ENCODE measurements at regions of chr19 and their contacts with region 1.

Region 1: GRCh38 chr19:48872182-48872883 is at the start of gene PPP1R15A:
- DNase-seq: peak; percentile 88
- H3K4me3 ChIP-seq: peak within 1 kb of the TSS; percentile 100
- CTCF ChIP-seq: no peak

Region 2: GRCh38 chr19:48835734-48836088 is 36.6 kb before region 1 on chr19:
- CTCF ChIA-PET with region 1: interaction called, 6 read pairs
- POLR2A ChIA-PET with region 1: interaction called, 12 read pairs
- DNase-seq: no peak
- H3K4me3 ChIP-seq: peak overlapping the region; percentile 64
- CTCF ChIP-seq: peak; percentile 92

Region 3: DNA sequence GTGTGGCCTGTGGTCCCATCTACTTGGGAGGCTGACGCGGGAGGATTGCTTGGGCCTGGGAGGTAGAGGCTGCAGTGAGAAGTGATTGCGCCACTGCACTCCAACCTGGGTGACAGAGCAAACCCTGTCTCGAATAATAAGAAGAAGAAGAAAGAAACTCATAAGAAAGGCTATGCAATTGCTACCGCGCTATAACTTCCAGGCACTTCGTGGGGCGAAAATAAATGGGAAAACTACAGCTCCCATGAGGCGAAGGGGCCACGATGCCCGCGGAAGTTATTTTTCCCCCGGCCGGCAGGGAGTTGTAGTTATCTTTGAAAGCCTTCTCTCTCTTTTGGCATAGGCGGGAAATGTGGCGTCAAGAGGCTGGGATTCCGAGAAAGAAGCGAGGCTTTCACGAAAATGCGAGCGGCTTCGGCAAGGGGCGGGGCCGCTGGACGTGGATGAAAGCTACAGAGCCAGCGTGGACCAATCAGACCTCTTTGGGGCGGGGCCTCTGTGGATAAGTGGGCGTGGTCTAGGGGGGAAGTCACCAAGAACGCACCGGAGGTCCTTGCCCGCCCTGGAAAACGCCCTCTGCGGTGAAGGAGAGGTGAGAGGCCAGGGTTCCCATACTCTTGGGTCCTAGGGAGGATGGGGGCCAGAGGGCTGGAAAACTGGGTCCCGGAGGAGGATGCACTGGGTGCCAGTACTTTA is 27.6 kb after region 1 on chr19 and contains the start of gene NUCB1:
- CTCF ChIA-PET with region 1: no interaction called
- POLR2A ChIA-PET with region 1: interaction called, 14 read pairs
- DNase-seq: peak; percentile 83
- H3K4me3 ChIP-seq: peak within 1 kb of the TSS; percentile 97
- CTCF ChIP-seq: peak; percentile 17

Region 4: DNA sequence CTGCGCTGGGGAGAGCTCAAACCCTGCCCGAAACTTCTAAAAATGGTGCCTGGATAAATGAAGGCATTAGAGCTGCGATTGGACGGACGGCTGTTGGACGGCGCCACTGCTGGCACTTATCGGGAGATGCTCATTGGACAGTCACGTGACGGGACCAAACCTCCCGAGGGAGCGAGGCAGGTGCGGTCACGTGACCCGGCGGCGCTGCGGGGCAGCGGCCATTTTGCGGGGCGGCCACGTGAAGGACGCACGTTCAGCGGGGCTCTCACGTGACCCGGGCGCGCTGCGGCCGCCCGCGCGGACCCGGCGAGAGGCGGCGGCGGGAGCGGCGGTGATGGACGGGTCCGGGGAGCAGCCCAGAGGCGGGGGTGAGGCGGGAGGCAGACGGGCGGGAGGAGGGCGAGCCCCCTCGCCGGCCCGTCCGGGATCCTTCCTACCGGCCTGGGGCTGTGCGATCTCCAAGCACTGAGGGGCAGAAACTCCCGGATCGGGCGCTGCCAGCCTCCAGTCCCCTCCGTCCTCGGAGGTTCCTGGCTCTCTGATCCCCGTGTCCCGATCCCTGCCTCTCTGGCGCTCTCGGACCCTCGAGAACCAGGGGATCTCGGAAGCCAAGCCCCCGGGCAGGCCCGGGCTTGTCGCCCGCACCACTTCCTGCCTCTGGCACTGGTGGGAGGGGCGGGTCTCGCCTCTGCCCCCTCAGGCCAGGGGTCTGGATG is 82.4 kb after region 1 on chr19 and contains the start of gene BAX:
- CTCF ChIA-PET with region 1: no interaction called
- POLR2A ChIA-PET with region 1: interaction called, 10 read pairs
- DNase-seq: no peak
- H3K4me3 ChIP-seq: peak within 1 kb of the TSS; percentile 94
- CTCF ChIP-seq: peak; percentile 12

Region 5: GRCh38 chr19:49073514-49074378 is 201.4 kb after region 1 on chr19:
- CTCF ChIA-PET with region 1: no interaction called
- POLR2A ChIA-PET with region 1: no interaction called
- DNase-seq: no peak
- H3K4me3 ChIP-seq: no peak overlapping the region
- CTCF ChIP-seq: peak; percentile 34

Measured in AG04449 (cell line).